HCT116 (cell line): ENCODE measurements at regions of chr19 and their contacts with region 1.

Region 1: GRCh38 chr19:6372594-6373095 is at the start of gene ALKBH7:
- DNase-seq: peak; percentile 100
- ATAC-seq: peak; percentile 85
- H3K4me3 ChIP-seq: peak within 1 kb of the TSS; percentile 72 to 95
- H3K27ac ChIP-seq: peak within 1 kb of the TSS; percentile 86
- H3K4me1 ChIP-seq: peaks cover 5 to 16% of the 10 kb centered on the region in 2 experiments; a peak in 3 of 4 replicates
- H3K27me3 ChIP-seq: no peaks in the 10 kb centered on the region
- CTCF ChIP-seq: no peak
- POLR2A ChIP-seq: peak; percentile 9
- RAD21 ChIP-seq: no peak
- total RNA-seq, gene ALKBH7: 57.1 TPM

Region 2: GRCh38 chr19:6359568-6360341 is 12.9 kb before region 1 on chr19:
- CTCF ChIA-PET with region 1: interaction called, 6 read pairs
- POLR2A ChIA-PET with region 1: interaction called, 16 read pairs
- RAD21 ChIA-PET with region 1: interaction called in 1 of 2 experiments, 4 read pairs
- intact Hi-C with region 1: no loop called
- DNase-seq: no peak
- ATAC-seq: no peak
- H3K4me3 ChIP-seq: no peak overlapping the region
- H3K27ac ChIP-seq: no peak overlapping the region
- H3K4me1 ChIP-seq: peaks cover 0 to 22% of the 10 kb centered on the region in 2 experiments
- H3K27me3 ChIP-seq: no peaks in the 10 kb centered on the region
- CTCF ChIP-seq: no peak
- POLR2A ChIP-seq: no peak
- RAD21 ChIP-seq: no peak